HCT116 (cell line): ENCODE measurements at regions of chr22 and their contacts with region 1.

Region 1: GRCh38 chr22:25134028-25134427 is 65.6 kb upstream of the CRYBB3 start:
- DNase-seq: no peak
- ATAC-seq: no peak
- H3K4me3 ChIP-seq: no peak overlapping the region
- H3K27ac ChIP-seq: no peak overlapping the region
- H3K4me1 ChIP-seq: no peaks in the 10 kb centered on the region
- H3K27me3 ChIP-seq: no peaks in the 10 kb centered on the region
- CTCF ChIP-seq: no peak
- POLR2A ChIP-seq: no peak
- RAD21 ChIP-seq: no peak

Region 2: GRCh38 chr22:25146307-25146706 is 12.3 kb after region 1 on chr22:
- CTCF ChIA-PET with region 1: no interaction called
- POLR2A ChIA-PET with region 1: no interaction called
- RAD21 ChIA-PET with region 1: no interaction called
- intact Hi-C with region 1: loop called (anchors 1 kb)
- DNase-seq: no peak
- ATAC-seq: no peak
- H3K4me3 ChIP-seq: no peak overlapping the region
- H3K27ac ChIP-seq: no peak overlapping the region
- H3K4me1 ChIP-seq: no peaks in the 10 kb centered on the region
- H3K27me3 ChIP-seq: no peaks in the 10 kb centered on the region
- CTCF ChIP-seq: no peak
- POLR2A ChIP-seq: no peak
- RAD21 ChIP-seq: no peak